ENCODE measurements at regions of chr2 and their contacts with region 1.

Region 1: GRCh38 chr2:218357236-218358159 is 841 bp downstream of the CATIP start:
- DNase-seq: no peak
- ATAC-seq: peak; percentile 18 to 34
- H3K4me3 ChIP-seq: no peak overlapping the region
- H3K27ac ChIP-seq: no peak overlapping the region
- H3K4me1 ChIP-seq: no peaks in the 10 kb centered on the region
- H3K27me3 ChIP-seq: no peaks in the 10 kb centered on the region

Region 2: GRCh38 chr2:218301176-218301819 is 56.2 kb before region 1 on chr2:
- intact Hi-C with region 1: loop called (anchors 2 to 5 kb)
- DNase-seq: peak; percentile 77 to 90 (median 83)
- ATAC-seq: peak; percentile 71 to 76
- H3K4me3 ChIP-seq: no peak overlapping the region
- H3K27ac ChIP-seq: no peak overlapping the region
- H3K4me1 ChIP-seq: no peaks in the 10 kb centered on the region
- H3K27me3 ChIP-seq: no peaks in the 10 kb centered on the region

Region 3: DNA sequence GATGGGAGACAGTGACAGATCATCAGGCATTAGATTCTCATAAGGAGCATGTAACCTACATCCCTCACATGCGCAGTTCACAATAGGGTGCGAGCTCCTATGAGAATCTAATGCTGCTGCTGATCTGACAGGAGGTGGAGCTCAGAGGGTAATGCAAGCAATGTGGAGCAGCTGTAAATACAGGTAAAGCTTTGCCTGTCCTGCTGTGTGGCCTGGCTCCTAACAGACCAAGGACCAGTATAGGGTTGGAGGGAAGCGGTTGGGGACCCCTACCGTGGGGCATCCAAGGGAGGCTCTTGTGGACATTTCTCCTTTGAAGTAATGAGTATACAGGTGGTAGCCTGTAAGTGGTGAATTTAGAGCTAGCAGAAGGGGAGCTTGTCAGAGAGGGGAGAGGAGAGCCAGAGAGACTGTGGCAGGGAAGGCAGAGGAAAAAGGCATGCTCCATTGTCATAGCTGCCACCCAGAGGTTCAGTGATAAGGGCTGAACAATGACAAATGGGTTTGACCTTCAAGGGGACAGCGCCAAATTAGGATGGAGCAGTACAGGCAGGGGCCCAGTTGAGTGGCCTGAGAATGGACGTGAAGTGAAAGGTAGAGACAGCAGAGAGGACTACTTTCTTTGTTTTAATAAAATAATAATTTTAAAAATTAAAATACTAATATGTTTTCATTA is 49.9 kb before region 1 on chr2:
- intact Hi-C with region 1: loop called in 3 of 4 experiments (anchors 5 kb)
- DNase-seq: peak in 1 of 3 donors; percentile 18
- ATAC-seq: peak in 1 of 2 donors; percentile 40
- H3K4me3 ChIP-seq: no peak overlapping the region
- H3K27ac ChIP-seq: no peak overlapping the region
- H3K4me1 ChIP-seq: peaks cover 5% of the 10 kb centered on the region
- H3K27me3 ChIP-seq: no peaks in the 10 kb centered on the region

Region 4: DNA sequence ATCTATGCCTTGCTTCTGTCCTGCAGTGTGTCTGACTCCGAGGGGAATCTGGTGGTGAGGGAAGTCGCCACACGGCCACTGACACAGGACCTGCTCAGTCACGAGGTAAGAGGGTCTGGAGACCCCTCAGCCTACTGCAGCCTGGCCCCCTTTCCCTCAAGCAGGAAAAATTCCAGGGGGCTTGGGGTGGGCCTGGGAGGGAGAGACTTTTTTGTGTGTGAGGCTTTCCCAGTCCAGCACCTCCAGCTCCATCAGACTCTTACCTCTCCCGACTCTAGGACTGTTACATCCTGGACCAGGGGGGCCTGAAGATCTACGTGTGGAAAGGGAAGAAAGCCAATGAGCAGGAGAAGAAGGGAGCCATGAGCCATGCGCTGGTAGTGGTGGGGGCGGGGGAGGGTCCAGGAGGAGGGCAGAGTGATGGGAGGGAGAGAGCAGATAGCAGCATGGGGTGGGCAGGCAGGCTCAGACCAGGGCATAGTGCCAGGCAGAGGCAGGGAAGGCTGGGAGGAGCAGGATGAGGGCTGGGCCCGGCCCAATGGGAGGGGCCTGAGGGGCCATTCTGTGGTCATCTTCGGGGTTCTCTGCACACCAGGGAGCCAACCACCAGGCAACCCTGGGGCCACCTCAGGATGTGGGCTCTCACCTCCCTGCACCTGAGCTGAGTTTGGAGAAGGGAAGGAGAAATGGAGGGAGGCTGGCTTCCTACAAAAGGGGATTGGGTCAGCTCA is 72.2 kb after region 1 on chr2:
- intact Hi-C with region 1: no loop called
- DNase-seq: no peak
- ATAC-seq: peak in 1 of 2 donors; percentile 34
- H3K4me3 ChIP-seq: no peak overlapping the region
- H3K27ac ChIP-seq: no peak overlapping the region
- H3K4me1 ChIP-seq: no peaks in the 10 kb centered on the region
- H3K27me3 ChIP-seq: no peaks in the 10 kb centered on the region

Measured in right cardiac atrium (tissue), 5 donors.